ENCODE measurements at regions of chr19 and their contacts with region 1.

Region 1: DNA sequence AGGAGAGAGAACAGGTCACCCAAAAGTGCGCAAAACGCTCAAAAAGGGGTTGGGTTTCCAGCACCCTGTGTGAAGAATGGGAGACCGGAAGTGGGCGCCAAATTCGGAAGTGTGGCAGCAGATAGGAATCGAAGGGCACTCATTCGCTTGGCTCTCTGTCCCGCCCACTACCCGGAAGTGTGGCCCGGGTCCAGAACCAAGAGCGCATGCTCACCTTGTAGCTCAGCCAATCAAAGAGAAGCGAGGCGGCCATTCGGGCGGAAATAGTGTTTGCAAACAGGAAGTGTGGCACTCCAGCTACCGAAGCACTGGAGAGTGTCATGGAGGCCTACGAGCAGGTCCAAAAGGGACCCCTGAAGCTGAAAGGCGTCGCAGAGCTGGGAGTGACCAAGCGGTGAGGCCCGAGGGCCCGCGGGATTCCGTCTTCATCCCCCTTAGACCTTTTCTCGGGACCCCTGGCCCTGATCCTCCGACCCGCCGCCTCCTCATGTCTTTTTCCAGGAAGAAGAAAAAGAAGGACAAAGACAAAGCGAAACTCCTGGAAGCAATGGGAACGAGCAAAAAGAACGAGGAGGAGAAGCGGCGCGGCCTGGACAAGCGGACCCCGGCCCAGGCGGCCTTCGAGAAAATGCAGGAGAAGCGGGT is at the start of gene FAM32A:
- DNase-seq: peak; percentile 99 to 100
- H3K4me3 ChIP-seq: peak within 1 kb of the TSS; percentile 42 to 91 (median 72)
- H3K27ac ChIP-seq: peak within 1 kb of the TSS in 2 of 3 donors; percentile 37
- H3K4me1 ChIP-seq: peaks cover 13 to 14% of the 10 kb centered on the region in 2 donors
- H3K27me3 ChIP-seq: no peaks in the 10 kb centered on the region
- CTCF ChIP-seq: peak in 4 of 6 experiments; percentile 27 to 61 (median 48)
- POLR2A ChIP-seq: peak in 1 of 2 donors; percentile 70
- total RNA-seq, gene FAM32A: 67.9 to 93.9 (median 87.9) TPM

Region 2: GRCh38 chr19:15631817-15632216 is 553.4 kb before region 1 on chr19:
- intact Hi-C with region 1: loop called (anchors 5 kb)
- DNase-seq: no peak
- H3K4me3 ChIP-seq: no peak overlapping the region
- H3K27ac ChIP-seq: no peak overlapping the region
- H3K4me1 ChIP-seq: no peaks in the 10 kb centered on the region
- H3K27me3 ChIP-seq: peaks cover 3% of the 10 kb centered on the region
- CTCF ChIP-seq: peak in 1 of 6 experiments; percentile 40
- POLR2A ChIP-seq: no peak

Region 3: DNA sequence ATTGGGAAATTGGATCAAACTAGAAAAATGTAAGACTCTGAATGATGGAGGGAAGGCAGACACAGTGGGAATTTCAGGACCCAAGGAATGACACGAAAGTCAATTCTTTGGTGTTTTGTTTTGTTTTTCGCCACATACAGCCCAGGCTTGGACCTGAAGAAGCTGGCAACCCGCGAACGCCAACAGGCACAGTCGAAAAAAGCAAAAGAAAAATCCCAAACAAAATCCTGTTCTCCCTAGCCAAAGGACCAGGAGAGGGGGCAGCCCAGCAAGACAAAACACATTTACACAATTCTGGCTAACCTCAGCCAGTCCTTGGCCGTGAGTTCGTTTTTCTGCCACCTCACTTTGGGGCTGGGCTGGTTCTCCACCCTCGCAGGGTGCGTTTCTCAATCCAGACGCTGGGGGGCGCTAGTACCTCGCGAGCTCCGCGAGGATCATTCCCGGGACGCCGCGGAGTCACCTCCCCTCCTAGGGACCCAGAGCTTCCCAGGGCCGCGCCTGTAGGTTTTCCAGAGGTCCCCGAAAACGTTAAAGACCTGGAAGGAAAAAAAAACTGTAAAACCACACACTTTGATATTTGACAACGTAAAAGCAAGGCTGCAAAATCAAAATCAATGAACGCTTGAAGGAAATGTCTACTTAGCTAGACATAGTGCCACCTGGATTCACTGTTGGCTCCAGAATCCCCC is 143.8 kb before region 1 on chr19:
- intact Hi-C with region 1: loop called (anchors 2 kb)
- DNase-seq: peak; percentile 55 to 69
- H3K4me3 ChIP-seq: no peak overlapping the region
- H3K27ac ChIP-seq: no peak overlapping the region
- H3K4me1 ChIP-seq: no peaks in the 10 kb centered on the region
- H3K27me3 ChIP-seq: no peaks in the 10 kb centered on the region
- CTCF ChIP-seq: peak; percentile 74 to 97 (median 84)
- POLR2A ChIP-seq: no peak

Region 4: DNA sequence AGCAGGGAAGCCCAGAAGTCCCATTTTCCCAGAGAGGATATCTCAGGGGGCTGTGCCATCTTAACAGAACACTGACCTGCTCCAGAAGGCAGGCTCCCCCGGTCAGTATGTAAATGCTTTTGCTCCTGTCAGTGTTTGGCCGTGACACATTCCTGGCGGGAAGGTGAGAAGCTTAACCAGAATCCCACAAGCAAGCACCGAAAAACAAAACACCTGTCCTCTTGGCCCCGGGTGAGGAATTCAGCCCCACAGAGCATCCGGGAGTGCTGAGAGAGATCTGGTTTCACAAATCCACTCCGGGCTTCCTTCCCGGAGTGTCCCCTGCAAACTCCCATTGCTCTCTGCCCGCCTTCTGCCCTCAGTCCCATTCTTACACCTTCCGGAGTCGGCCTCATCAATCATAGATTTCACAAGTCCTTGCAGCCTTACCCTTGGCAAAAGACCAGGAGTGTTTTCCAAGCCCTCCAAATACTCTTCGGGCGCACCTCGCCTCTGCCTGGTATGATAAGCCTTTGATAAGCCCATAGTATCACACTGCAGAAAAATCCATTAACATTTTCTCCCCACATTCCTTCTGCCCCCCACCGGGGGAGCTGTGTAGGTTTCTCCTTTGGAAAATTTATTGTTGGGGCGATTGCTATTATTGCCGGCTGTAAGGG is 96.8 kb before region 1 on chr19:
- intact Hi-C with region 1: no loop called
- DNase-seq: no peak
- H3K4me3 ChIP-seq: no peak overlapping the region
- H3K27ac ChIP-seq: no peak overlapping the region
- H3K4me1 ChIP-seq: peaks cover 0 to 2% of the 10 kb centered on the region in 2 donors
- H3K27me3 ChIP-seq: no peaks in the 10 kb centered on the region
- CTCF ChIP-seq: no peak
- POLR2A ChIP-seq: no peak